ENCODE measurements at regions of chr1 and their contacts with region 1.

Region 1: GRCh38 chr1:64487061-64487460 is 17.1 kb downstream of the CACHD1 start:
- DNase-seq: no peak

Region 2: GRCh38 chr1:64539781-64540218 is 52.7 kb after region 1 on chr1:
- intact Hi-C with region 1: loop called in 1 of 2 experiments (anchors 10 kb)
- DNase-seq: no peak

Region 3: DNA sequence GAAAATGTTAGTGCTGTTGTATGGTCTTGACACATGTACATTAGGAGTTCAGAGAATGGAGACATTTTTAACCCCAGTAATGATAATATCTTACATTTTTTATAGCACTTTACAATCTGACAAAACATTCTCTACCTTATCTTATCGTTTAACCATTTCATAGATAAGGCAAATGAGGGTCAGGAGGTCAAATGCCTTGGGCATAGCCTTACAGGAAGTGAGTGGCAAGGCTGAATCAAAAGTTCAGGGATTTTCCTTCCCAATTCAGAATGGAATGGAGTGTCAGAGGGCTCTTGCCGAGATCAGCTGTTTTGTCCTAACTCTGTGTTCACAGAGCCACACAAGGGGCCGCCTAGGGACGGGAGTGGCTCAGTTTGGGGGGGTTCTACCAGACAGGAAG is 603.3 kb after region 1 on chr1:
- intact Hi-C with region 1: no loop called
- DNase-seq: no peak